CD4-positive, alpha-beta T cell (primary cell): ENCODE measurements at regions of chr5 and their contacts with region 1.

Region 1: DNA sequence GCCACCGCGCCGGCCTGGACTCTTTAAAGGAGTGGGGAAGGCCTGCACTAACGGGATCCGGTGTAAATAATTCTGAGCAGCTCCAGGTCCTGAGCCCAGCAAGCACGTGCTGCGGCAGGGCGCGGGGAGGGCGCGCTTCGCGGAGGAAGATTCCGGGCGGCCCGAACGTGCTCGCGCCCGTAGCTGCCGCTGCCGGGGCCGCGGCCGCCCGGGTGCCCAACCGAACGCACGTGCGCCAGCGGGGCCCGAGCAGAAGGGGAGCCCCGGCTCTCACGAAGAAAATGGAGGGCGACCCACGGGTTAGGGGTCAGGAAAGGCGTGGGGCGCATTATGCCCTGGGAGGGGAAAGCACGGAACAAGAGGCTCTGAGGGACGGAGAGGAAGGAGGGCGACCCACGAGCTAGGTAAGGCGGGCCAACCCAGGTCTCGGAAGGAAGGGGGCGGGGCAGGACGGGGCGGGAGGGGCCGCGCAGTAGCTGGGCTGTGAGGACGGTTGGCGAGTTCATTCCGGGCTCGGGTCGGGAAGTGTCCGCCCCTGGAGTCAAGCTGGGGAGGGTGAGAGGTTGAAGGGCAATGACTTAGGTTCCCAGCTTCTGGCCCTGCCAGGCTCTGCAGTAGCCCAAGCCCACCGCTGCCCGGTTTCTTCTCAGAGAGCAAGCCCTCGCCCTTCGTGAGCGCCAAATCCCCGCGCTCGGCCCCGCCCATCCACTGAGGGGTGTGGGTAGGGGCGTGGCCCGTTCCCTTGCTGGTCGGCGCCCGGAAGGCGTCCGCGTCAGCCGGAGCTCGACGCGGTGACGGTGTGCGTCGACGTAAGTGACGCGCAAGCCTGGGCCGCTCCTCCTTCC is at the start of gene ZNF131:
- DNase-seq: peak; percentile 92 to 99 (median 97)
- ATAC-seq: peak; percentile 84
- H3K4me3 ChIP-seq: peak within 1 kb of the TSS; percentile 91
- H3K4me3 Mint-ChIP-seq: peak within 1 kb of the TSS; percentile 97
- H3K27ac ChIP-seq: peak within 1 kb of the TSS; percentile 93 to 94
- H3K27ac Mint-ChIP-seq: peak within 1 kb of the TSS; percentile 94
- H3K4me1 ChIP-seq: peaks cover 30% of the 10 kb centered on the region
- H3K4me1 Mint-ChIP-seq: peaks cover 39% of the 10 kb centered on the region
- H3K27me3 ChIP-seq: no peaks in the 10 kb centered on the region
- H3K27me3 Mint-ChIP-seq: no peaks in the 10 kb centered on the region
- CTCF ChIP-seq: no peak
- total RNA-seq, gene ZNF131: 71.7 to 72.4 TPM

Region 2: DNA sequence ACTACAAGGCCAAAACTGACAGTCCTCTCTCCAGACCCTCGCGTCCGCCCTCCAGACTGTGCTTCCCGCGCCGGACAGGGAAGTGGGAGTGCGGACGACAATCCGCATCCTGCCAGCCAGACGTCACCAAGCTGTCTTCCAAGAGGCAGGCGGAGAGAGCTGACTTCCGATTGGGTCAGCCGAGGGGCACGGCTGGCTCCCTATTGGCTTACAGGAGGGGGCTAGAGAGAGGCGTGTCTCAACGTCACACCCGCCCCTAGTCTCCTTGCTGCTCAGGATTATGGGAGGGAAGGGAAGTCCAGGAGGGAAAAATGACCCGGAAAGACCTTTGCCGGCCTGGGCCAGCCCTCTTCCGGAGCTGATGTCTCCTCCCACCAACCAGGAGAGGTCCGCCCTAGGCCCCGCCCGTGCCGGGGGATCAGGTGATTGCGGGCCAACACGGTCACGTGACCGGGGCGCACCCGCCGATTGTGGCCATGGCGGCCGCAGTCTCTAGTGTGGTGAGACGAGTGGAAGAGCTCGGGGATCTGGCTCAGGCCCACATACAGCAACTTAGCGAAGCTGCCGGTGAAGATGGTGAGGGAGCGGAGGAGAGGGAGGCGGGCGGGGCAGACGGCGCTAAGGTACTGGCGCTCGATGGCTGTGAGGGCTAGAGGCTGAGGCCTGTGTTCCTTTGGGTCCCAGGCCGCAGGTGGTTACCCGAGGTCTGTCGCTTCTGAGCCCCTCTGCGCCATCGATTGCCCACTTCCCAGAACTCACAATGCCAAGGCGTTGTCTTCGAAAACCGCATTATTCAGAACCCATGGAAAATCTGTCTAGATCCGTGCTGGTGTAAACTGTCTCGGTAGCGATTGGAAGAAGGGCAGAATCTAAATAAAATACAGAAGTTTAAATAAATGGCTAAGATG is 1216.8 kb before region 1 on chr5 and contains the start of gene RIMOC1:
- CTCF ChIA-PET with region 1: no interaction called
- POLR2A ChIA-PET with region 1: interaction called, 21 read pairs
- intact Hi-C with region 1: loop called in 1 of 2 experiments (anchors 10 kb)
- DNase-seq: peak; percentile 93 to 99 (median 96)
- ATAC-seq: peak; percentile 85
- H3K4me3 ChIP-seq: peak within 1 kb of the TSS; percentile 86
- H3K4me3 Mint-ChIP-seq: peak within 1 kb of the TSS; percentile 98
- H3K27ac ChIP-seq: peak within 1 kb of the TSS; percentile 89 to 90
- H3K27ac Mint-ChIP-seq: peak within 1 kb of the TSS; percentile 99
- H3K4me1 ChIP-seq: peaks cover 20% of the 10 kb centered on the region
- H3K4me1 Mint-ChIP-seq: peaks cover 46% of the 10 kb centered on the region
- H3K27me3 ChIP-seq: no peaks in the 10 kb centered on the region
- H3K27me3 Mint-ChIP-seq: no peaks in the 10 kb centered on the region
- CTCF ChIP-seq: no peak
- total RNA-seq, gene RIMOC1: 9.3 to 10.3 TPM

Region 3: DNA sequence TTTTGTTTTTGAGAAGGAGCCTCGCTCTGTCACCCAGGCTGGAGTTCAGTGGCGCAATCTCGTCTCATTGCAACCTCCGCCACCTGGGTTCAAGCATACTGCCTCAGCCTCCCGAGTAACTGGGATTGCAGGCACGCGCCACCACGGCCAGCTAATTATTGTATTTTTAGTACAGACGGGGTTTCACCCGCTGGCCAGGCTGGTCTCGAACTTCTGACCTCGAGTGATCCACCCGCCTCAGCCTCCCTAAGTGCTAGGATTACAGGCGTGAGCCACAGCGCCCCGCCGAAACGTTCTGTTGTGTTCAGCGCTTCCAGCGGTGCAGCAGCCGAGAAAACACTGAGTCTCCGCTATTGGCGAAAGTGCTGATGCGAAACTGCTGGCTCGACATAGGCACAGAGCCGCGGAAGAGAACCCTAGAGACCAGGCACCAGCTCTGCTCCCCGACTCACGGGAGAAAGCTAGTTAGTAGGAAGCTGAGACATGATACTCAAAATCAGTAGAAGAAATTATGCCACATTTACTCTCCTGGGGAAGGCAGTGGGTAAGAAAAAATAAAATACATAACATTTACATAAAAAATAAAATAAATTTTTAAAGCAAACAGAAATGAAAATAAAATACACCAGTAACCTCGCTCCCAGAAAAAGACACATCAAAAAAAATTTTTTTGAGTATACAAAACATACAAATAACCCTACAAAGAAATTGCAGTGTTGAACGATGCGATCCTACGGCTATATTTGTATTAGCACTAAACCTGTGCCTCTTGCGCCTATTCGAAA is 112.4 kb before region 1 on chr5:
- CTCF ChIA-PET with region 1: no interaction called
- POLR2A ChIA-PET with region 1: interaction called, 105 read pairs
- intact Hi-C with region 1: loop called in 1 of 2 experiments (anchors 5 kb)
- DNase-seq: peak; percentile 87 to 97 (median 92)
- ATAC-seq: peak; percentile 63
- H3K4me3 ChIP-seq: peak overlapping the region; percentile 82
- H3K4me3 Mint-ChIP-seq: peak overlapping the region; percentile 92
- H3K27ac ChIP-seq: peak overlapping the region; percentile 91 to 95
- H3K27ac Mint-ChIP-seq: peak overlapping the region; percentile 95
- H3K4me1 ChIP-seq: peaks cover 36% of the 10 kb centered on the region
- H3K4me1 Mint-ChIP-seq: peaks cover 42% of the 10 kb centered on the region
- H3K27me3 ChIP-seq: no peaks in the 10 kb centered on the region
- H3K27me3 Mint-ChIP-seq: no peaks in the 10 kb centered on the region
- CTCF ChIP-seq: no peak

Region 4: GRCh38 chr5:43066799-43067741 is 53.9 kb before region 1 on chr5:
- CTCF ChIA-PET with region 1: interaction called, 8 read pairs
- POLR2A ChIA-PET with region 1: interaction called, 173 read pairs
- intact Hi-C with region 1: loop called (anchors 2 kb)
- DNase-seq: peak; percentile 84 to 94 (median 90)
- ATAC-seq: peak; percentile 45
- H3K4me3 ChIP-seq: peak overlapping the region; percentile 78
- H3K4me3 Mint-ChIP-seq: peak overlapping the region; percentile 97
- H3K27ac ChIP-seq: peak overlapping the region; percentile 97 to 98
- H3K27ac Mint-ChIP-seq: peak overlapping the region; percentile 96
- H3K4me1 ChIP-seq: peaks cover 55% of the 10 kb centered on the region
- H3K4me1 Mint-ChIP-seq: peaks cover 49% of the 10 kb centered on the region
- H3K27me3 ChIP-seq: no peaks in the 10 kb centered on the region
- H3K27me3 Mint-ChIP-seq: no peaks in the 10 kb centered on the region
- CTCF ChIP-seq: no peak

Region 5: GRCh38 chr5:43140286-43140685 is 19.3 kb after region 1 on chr5:
- CTCF ChIA-PET with region 1: interaction called, 3 read pairs
- POLR2A ChIA-PET with region 1: interaction called, 23 read pairs
- intact Hi-C with region 1: no loop called
- DNase-seq: peak in 3 of 14 experiments; percentile 30 to 44 (median 34)
- ATAC-seq: peak; percentile 29
- H3K4me3 ChIP-seq: no peak overlapping the region
- H3K4me3 Mint-ChIP-seq: no peak overlapping the region
- H3K27ac ChIP-seq: peak overlapping the region in 1 of 2 donors; percentile 36
- H3K27ac Mint-ChIP-seq: peak overlapping the region; percentile 61
- H3K4me1 ChIP-seq: peaks cover 11% of the 10 kb centered on the region
- H3K4me1 Mint-ChIP-seq: peaks cover 61% of the 10 kb centered on the region
- H3K27me3 ChIP-seq: no peaks in the 10 kb centered on the region
- H3K27me3 Mint-ChIP-seq: no peaks in the 10 kb centered on the region
- CTCF ChIP-seq: no peak

Region 6: GRCh38 chr5:43602461-43603343 is 481.8 kb after region 1 on chr5 and contains the start of gene NNT:
- CTCF ChIA-PET with region 1: no interaction called
- POLR2A ChIA-PET with region 1: interaction called, 16 read pairs
- intact Hi-C with region 1: loop called in 1 of 2 experiments (anchors 2 kb)
- DNase-seq: peak; percentile 55 to 89 (median 72)
- ATAC-seq: peak; percentile 78
- H3K4me3 ChIP-seq: peak within 1 kb of the TSS; percentile 98
- H3K4me3 Mint-ChIP-seq: peak within 1 kb of the TSS; percentile 93
- H3K27ac ChIP-seq: peak within 1 kb of the TSS; percentile 58 to 82
- H3K27ac Mint-ChIP-seq: peak within 1 kb of the TSS; percentile 87
- H3K4me1 ChIP-seq: peaks cover 31% of the 10 kb centered on the region
- H3K4me1 Mint-ChIP-seq: peaks cover 58% of the 10 kb centered on the region
- H3K27me3 ChIP-seq: no peaks in the 10 kb centered on the region
- H3K27me3 Mint-ChIP-seq: no peaks in the 10 kb centered on the region
- CTCF ChIP-seq: no peak
- total RNA-seq, gene NNT: 22.3 to 23.5 TPM